ENCODE measurements at regions of chr1 and their contacts with region 1.

Region 1: GRCh38 chr1:230972855-230973271 is 5.8 kb downstream of the TTC13 start:
- DNase-seq: peak; percentile 55
- ATAC-seq: peak; percentile 84
- H3K4me3 ChIP-seq: no peak overlapping the region; the same call in 1 of the 2 replicates
- H3K27ac ChIP-seq: peak overlapping the region; percentile 74
- H3K4me1 ChIP-seq: peaks cover 19% of the 10 kb centered on the region
- H3K27me3 ChIP-seq: no peaks in the 10 kb centered on the region
- CTCF ChIP-seq: no peak
- EP300 ChIP-seq: no peak
- POLR2A ChIP-seq: no peak
- RAD21 ChIP-seq: no peak

Region 2: DNA sequence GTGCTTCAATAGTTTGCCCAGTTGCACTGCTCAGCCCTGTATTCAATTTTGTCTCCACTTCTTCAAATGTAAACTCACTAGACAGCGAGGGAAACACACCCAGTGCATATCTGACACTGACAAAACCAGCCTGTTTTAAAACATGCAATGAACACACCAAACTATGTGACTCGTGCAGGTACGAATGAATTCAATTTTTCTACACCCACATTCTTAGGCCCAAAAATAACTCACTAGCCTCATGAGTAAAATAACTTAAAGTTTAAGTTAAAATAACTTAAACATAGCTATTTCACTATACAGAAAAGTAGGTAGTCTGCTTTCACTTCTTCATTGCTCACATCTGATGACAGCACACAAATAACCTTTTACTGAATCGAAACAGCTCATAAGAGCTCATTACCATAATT is 15.3 kb before region 1 on chr1:
- CTCF ChIA-PET with region 1: interaction called, 12 read pairs
- POLR2A ChIA-PET with region 1: interaction called, 6 read pairs
- RAD21 ChIA-PET with region 1: interaction called, 24 read pairs
- SMC1A ChIA-PET with region 1: interaction called, 69 read pairs
- in situ Hi-C with region 1: no loop called
- intact Hi-C with region 1: no loop called
- DNase-seq: no peak
- ATAC-seq: peak; percentile 84
- H3K4me3 ChIP-seq: no peak overlapping the region
- H3K27ac ChIP-seq: peak overlapping the region; percentile 56
- H3K4me1 ChIP-seq: peaks cover 8% of the 10 kb centered on the region
- H3K27me3 ChIP-seq: no peaks in the 10 kb centered on the region
- CTCF ChIP-seq: no peak
- EP300 ChIP-seq: no peak
- POLR2A ChIP-seq: no peak
- RAD21 ChIP-seq: no peak

Measured in GM12878 (cell line).